SK-N-SH (cell line): ENCODE measurements at regions of chr15 and their contacts with region 1.

Region 1: GRCh38 chr15:45611305-45611704 is 23.5 kb upstream of the SQOR start:
- DNase-seq: peak; percentile 32
- H3K4me3 ChIP-seq: no peak overlapping the region
- H3K27ac ChIP-seq: no peak overlapping the region
- H3K4me1 ChIP-seq: no peaks in the 10 kb centered on the region
- H3K27me3 ChIP-seq: no peaks in the 10 kb centered on the region
- CTCF ChIP-seq: peak; percentile 71
- EP300 ChIP-seq: no peak
- RAD21 ChIP-seq: peak; percentile 67

Region 2: GRCh38 chr15:44219073-44219472 is 1392.2 kb before region 1 on chr15:
- CTCF ChIA-PET with region 1: no interaction called
- POLR2A ChIA-PET with region 1: no interaction called
- DNase-seq: no peak
- H3K4me3 ChIP-seq: no peak overlapping the region
- H3K27ac ChIP-seq: peak overlapping the region in 1 of 2 experiments; percentile 26; a peak in 1 of 4 replicates
- H3K4me1 ChIP-seq: peaks cover 0 to 15% of the 10 kb centered on the region in 2 experiments; a peak in 3 of 4 replicates
- H3K27me3 ChIP-seq: no peaks in the 10 kb centered on the region
- CTCF ChIP-seq: no peak
- EP300 ChIP-seq: no peak
- RAD21 ChIP-seq: 0 out of 2 replicates have a peak, but pooled peaks have one; percentile 3

Region 3: GRCh38 chr15:45587095-45587860 is 24.0 kb before region 1 on chr15 and contains the start of gene BLOC1S6:
- CTCF ChIA-PET with region 1: interaction called, 25 read pairs
- POLR2A ChIA-PET with region 1: interaction called, 4 read pairs
- DNase-seq: peak; percentile 90
- H3K4me3 ChIP-seq: peak within 1 kb of the TSS; percentile 84 to 87
- H3K27ac ChIP-seq: peak within 1 kb of the TSS; percentile 94 to 97
- H3K4me1 ChIP-seq: peaks cover 19 to 24% of the 10 kb centered on the region in 2 experiments; a peak in 3 of 4 replicates
- H3K27me3 ChIP-seq: no peaks in the 10 kb centered on the region
- CTCF ChIP-seq: no peak
- EP300 ChIP-seq: no peak
- RAD21 ChIP-seq: no peak
- polyA plus RNA-seq, gene BLOC1S6: 11.3 and 14.1 TPM in 2 replicates

Region 4: GRCh38 chr15:45594319-45594718 is 17.0 kb before region 1 on chr15:
- CTCF ChIA-PET with region 1: interaction called, 25 read pairs
- POLR2A ChIA-PET with region 1: interaction called, 3 read pairs
- DNase-seq: no peak
- H3K4me3 ChIP-seq: no peak overlapping the region
- H3K27ac ChIP-seq: no peak overlapping the region
- H3K4me1 ChIP-seq: peaks cover 7 to 9% of the 10 kb centered on the region in 2 experiments; a peak in 3 of 4 replicates
- H3K27me3 ChIP-seq: no peaks in the 10 kb centered on the region
- CTCF ChIP-seq: no peak
- EP300 ChIP-seq: no peak
- RAD21 ChIP-seq: no peak

Region 5: GRCh38 chr15:45634442-45635190 is 23.3 kb after region 1 on chr15 and contains the start of gene SQOR:
- CTCF ChIA-PET with region 1: interaction called, 16 read pairs
- POLR2A ChIA-PET with region 1: no interaction called
- DNase-seq: peak; percentile 81
- H3K4me3 ChIP-seq: peak within 1 kb of the TSS; percentile 57 to 61
- H3K27ac ChIP-seq: no peak within 1 kb of the TSS
- H3K4me1 ChIP-seq: peaks cover 3 to 8% of the 10 kb centered on the region in 2 experiments; a peak in 2 of 4 replicates
- H3K27me3 ChIP-seq: no peaks in the 10 kb centered on the region
- CTCF ChIP-seq: no peak
- EP300 ChIP-seq: no peak
- RAD21 ChIP-seq: no peak
- polyA plus RNA-seq, gene SQOR: 7.8 and 9.1 TPM in 2 replicates

Region 6: DNA sequence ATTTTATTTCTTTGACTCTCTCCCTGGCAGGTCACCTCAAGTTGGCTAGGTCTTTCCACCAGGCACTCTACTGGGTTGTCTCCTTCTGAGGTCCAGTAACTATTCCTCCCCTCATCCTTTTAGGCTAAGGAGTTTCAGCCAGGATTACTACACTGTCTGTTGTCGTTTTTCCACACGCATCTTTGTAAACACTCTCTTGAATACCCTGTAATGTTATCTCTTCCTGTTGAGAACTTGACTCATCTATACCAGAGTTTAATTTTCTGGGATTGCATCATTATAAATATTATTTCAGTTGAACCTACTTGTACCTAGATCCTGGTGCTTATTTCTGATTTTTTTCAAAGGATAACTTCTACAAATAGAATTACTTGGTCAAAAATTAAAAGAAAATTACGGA is 161.8 kb after region 1 on chr15:
- CTCF ChIA-PET with region 1: no interaction called
- POLR2A ChIA-PET with region 1: no interaction called
- DNase-seq: no peak
- H3K4me3 ChIP-seq: no peak overlapping the region
- H3K27ac ChIP-seq: no peak overlapping the region
- H3K4me1 ChIP-seq: no peaks in the 10 kb centered on the region
- H3K27me3 ChIP-seq: no peaks in the 10 kb centered on the region
- CTCF ChIP-seq: no peak
- EP300 ChIP-seq: no peak
- RAD21 ChIP-seq: no peak

Region 7: GRCh38 chr15:45884755-45885445 is 273.6 kb after region 1 on chr15:
- CTCF ChIA-PET with region 1: no interaction called
- POLR2A ChIA-PET with region 1: no interaction called
- DNase-seq: no peak
- H3K4me3 ChIP-seq: no peak overlapping the region
- H3K27ac ChIP-seq: no peak overlapping the region
- H3K4me1 ChIP-seq: no peaks in the 10 kb centered on the region
- H3K27me3 ChIP-seq: no peaks in the 10 kb centered on the region
- CTCF ChIP-seq: no peak
- EP300 ChIP-seq: no peak
- RAD21 ChIP-seq: no peak